ENCODE measurements at regions of chr18 and their contacts with region 1.

Region 1: GRCh38 chr18:72492497-72492896 is 51.6 kb downstream of the CBLN2 start:
- DNase-seq: no peak
- ATAC-seq: no peak
- H3K4me3 Mint-ChIP-seq: no peak overlapping the region
- H3K27ac Mint-ChIP-seq: no peak overlapping the region
- H3K4me1 Mint-ChIP-seq: no peaks in the 10 kb centered on the region
- H3K27me3 Mint-ChIP-seq: no peaks in the 10 kb centered on the region

Region 2: DNA sequence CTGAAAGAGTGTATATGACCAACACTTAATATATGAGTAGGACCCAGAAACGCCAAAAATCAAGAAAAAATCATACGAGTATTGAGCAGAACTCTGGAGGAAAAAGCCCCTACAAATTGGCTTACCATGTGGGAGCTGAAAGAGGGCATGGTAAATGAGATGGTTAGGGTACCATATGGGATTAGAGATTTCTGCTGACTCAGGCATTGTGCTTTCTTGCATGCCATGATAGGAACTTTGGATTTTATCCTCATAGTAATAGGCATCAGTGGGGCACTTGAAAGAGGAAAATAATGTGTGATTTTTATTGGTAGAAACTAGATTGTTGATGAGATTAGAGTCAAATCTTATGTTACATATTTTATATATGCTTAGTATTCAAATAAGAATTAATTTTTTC is 219.5 kb before region 1 on chr18:
- CTCF ChIA-PET with region 1: no interaction called
- POLR2A ChIA-PET with region 1: no interaction called
- intact Hi-C with region 1: no loop called
- DNase-seq: no peak
- ATAC-seq: no peak
- H3K4me3 Mint-ChIP-seq: no peak overlapping the region
- H3K27ac Mint-ChIP-seq: no peak overlapping the region
- H3K4me1 Mint-ChIP-seq: no peaks in the 10 kb centered on the region
- H3K27me3 Mint-ChIP-seq: no peaks in the 10 kb centered on the region

Region 3: DNA sequence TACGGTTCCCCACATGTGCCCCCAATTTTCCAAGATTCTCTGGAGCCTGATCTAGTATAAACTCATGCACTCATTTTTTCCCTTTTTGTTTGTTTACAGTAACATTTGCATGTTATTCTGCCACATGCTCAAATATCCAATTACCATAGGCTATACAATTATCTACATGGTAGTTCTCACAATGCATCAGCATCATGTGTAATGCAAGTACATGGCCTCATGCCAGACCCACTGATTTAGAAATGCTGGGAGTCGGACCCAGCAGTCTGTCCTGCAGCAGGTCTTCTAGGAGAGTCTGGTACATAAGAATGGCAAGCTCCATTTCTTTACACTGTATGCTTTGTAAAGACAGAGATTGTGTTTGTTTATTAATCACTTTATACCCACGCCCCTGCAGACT is 56.1 kb before region 1 on chr18:
- CTCF ChIA-PET with region 1: no interaction called
- POLR2A ChIA-PET with region 1: no interaction called
- intact Hi-C with region 1: loop called in 1 of 2 experiments (anchors 10 kb)
- DNase-seq: no peak
- ATAC-seq: no peak
- H3K4me3 Mint-ChIP-seq: no peak overlapping the region
- H3K27ac Mint-ChIP-seq: no peak overlapping the region
- H3K4me1 Mint-ChIP-seq: no peaks in the 10 kb centered on the region
- H3K27me3 Mint-ChIP-seq: no peaks in the 10 kb centered on the region

Measured in activated CD4-positive, alpha-beta T cell treated with anti-CD3 and anti-CD28 coated beads for 36 hours (primary cell).